ENCODE measurements at regions of chr19 and their contacts with region 1.

Region 1: GRCh38 chr19:3304871-3305423 is 61.4 kb upstream of the NFIC start:
- DNase-seq: peak; percentile 53 to 85 (median 79)
- ATAC-seq: peak; percentile 75
- H3K4me3 ChIP-seq: no peak overlapping the region
- H3K4me3 Mint-ChIP-seq: no peak overlapping the region
- H3K27ac ChIP-seq: no peak overlapping the region
- H3K27ac Mint-ChIP-seq: no peak overlapping the region
- H3K4me1 ChIP-seq: no peaks in the 10 kb centered on the region
- H3K4me1 Mint-ChIP-seq: no peaks in the 10 kb centered on the region
- H3K27me3 ChIP-seq: peaks cover 0 to 2% of the 10 kb centered on the region in 2 experiments
- H3K27me3 Mint-ChIP-seq: peaks cover 32% of the 10 kb centered on the region
- CTCF ChIP-seq: peak; percentile 82

Region 2: DNA sequence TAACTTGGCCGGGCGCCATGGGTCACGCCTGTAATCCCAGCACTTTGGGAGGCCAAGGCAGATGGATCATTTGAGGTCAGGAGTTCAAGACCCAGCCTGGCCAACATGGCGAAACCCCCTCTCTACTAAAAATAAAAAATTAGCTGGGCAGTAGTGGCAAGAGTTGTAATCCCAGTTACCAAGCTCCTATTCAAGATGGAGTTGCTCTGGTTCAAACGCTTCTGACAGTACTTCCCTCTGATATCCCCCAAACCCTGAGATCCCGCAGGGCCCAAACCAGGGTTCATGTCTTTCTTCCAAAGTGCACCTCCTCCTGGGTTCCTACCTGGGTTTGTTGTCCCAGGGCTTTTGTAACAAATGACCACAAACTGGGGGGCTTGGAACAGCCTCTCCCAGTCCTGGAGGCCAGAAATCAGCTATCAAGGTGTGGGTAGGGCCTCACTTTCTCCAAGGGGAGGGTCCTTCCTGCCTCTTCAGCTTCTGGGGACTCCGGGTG is 66.8 kb before region 1 on chr19:
- CTCF ChIA-PET with region 1: no interaction called
- POLR2A ChIA-PET with region 1: no interaction called
- intact Hi-C with region 1: no loop called
- DNase-seq: no peak
- ATAC-seq: no peak
- H3K4me3 ChIP-seq: no peak overlapping the region
- H3K4me3 Mint-ChIP-seq: no peak overlapping the region
- H3K27ac ChIP-seq: no peak overlapping the region
- H3K27ac Mint-ChIP-seq: no peak overlapping the region
- H3K4me1 ChIP-seq: no peaks in the 10 kb centered on the region
- H3K4me1 Mint-ChIP-seq: no peaks in the 10 kb centered on the region
- H3K27me3 ChIP-seq: no peaks in the 10 kb centered on the region
- H3K27me3 Mint-ChIP-seq: peaks cover 10% of the 10 kb centered on the region
- CTCF ChIP-seq: no peak

Region 3: GRCh38 chr19:3316132-3316648 is 11.2 kb after region 1 on chr19:
- CTCF ChIA-PET with region 1: interaction called, 11 read pairs
- POLR2A ChIA-PET with region 1: no interaction called
- intact Hi-C with region 1: no loop called
- DNase-seq: no peak
- ATAC-seq: no peak
- H3K4me3 ChIP-seq: no peak overlapping the region
- H3K4me3 Mint-ChIP-seq: no peak overlapping the region
- H3K27ac ChIP-seq: no peak overlapping the region
- H3K27ac Mint-ChIP-seq: no peak overlapping the region
- H3K4me1 ChIP-seq: no peaks in the 10 kb centered on the region
- H3K4me1 Mint-ChIP-seq: no peaks in the 10 kb centered on the region
- H3K27me3 ChIP-seq: peaks cover 10 to 22% of the 10 kb centered on the region in 2 experiments
- H3K27me3 Mint-ChIP-seq: peaks cover 24% of the 10 kb centered on the region
- CTCF ChIP-seq: no peak

Region 4: DNA sequence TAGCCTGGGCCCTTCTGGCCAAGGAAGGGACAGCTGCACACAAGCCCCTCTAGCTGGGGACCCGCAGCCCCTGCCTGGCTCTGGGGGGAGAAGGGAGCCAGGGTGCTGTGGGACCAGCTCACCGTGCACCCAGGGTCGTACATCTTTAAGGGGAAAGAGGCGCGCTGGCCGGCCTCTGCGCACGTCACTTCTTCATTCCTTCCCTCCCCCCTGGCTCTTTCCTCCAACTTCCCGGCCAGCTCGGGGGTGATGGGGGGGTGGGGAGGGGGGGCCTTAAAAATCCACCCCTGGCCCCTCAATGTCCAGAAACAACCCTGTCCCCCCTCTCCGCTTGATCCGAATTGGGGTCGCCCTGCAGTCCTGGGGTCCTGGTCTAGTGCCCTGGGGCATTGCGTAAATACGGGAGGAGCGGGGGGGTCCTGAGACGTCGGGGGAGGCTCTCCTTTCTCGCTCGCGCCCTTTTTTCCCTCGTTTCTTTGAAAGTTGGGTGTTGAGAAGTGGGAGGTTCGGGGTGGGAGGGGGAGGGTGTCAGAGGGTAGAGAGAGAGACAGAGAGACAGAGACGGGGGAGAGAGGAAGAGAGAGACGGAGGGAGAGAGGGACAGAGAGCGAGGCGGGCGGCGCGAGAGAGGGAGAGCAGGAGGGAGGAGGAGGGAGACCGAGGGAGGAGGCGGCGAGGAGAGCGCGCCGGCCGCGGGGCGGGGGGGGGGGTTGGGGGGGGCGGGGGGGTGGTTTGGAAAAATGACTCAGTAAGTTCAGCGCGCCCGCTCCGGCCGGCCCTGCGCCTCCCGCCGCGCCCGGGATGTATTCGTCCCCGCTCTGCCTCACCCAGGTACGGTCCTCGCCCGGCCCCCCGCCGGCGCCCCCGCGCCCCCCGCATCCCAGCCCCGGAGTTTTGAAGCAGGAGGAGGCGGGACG is 61.1 kb after region 1 on chr19 and contains the start of gene NFIC:
- CTCF ChIA-PET with region 1: no interaction called
- POLR2A ChIA-PET with region 1: no interaction called
- intact Hi-C with region 1: no loop called
- DNase-seq: peak in 4 of 9 experiments; percentile 40 to 65 (median 50)
- ATAC-seq: peak; percentile 21
- H3K4me3 ChIP-seq: peak within 1 kb of the TSS; percentile 46 to 50
- H3K4me3 Mint-ChIP-seq: peak within 1 kb of the TSS; percentile 72
- H3K27ac ChIP-seq: no peak within 1 kb of the TSS
- H3K27ac Mint-ChIP-seq: no peak within 1 kb of the TSS
- H3K4me1 ChIP-seq: peaks cover 38% of the 10 kb centered on the region
- H3K4me1 Mint-ChIP-seq: peaks cover 63% of the 10 kb centered on the region
- H3K27me3 ChIP-seq: no peaks in the 10 kb centered on the region
- H3K27me3 Mint-ChIP-seq: no peaks in the 10 kb centered on the region
- CTCF ChIP-seq: no peak
- total RNA-seq, gene NFIC: 16.5 to 17.5 TPM

Region 5: DNA sequence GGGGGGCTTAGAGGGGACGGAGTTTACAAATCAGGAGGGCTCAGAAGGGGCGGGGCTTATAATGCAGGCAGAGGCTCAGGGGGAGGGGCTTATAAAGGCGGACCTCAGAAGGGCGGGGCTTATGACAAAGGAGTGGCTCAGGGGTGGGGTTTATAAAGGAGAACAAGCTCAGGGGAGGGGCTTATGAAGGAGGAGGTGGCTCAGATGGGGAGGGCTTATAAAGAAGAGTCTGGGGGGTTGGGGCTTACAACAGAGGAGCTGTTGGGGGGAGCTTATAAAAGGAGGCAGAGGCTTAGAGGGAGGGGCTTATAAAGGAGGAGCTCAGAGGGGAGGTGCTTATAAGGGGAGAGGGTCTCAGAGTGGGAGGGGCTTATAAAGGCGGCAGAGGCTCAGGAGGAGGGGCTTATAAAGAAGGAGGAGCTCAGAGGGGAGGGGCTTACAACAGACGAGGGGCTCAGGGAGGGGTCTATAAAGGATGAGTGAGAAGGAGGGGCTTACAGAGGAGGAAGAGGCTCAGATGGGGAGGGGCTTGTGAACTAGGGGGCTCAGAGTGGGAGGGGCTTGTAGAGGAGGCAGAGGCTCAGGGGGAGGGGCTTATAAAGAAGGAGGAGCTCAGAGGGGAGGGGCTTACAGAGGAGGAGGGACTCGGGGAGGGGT is 174.4 kb after region 1 on chr19:
- CTCF ChIA-PET with region 1: interaction called, 12 read pairs
- POLR2A ChIA-PET with region 1: no interaction called
- intact Hi-C with region 1: no loop called
- DNase-seq: peak in 8 of 9 experiments; percentile 24 to 81 (median 54)
- ATAC-seq: peak; percentile 84
- H3K4me3 ChIP-seq: peak overlapping the region; percentile 33 to 43
- H3K4me3 Mint-ChIP-seq: no peak overlapping the region
- H3K27ac ChIP-seq: no peak overlapping the region
- H3K27ac Mint-ChIP-seq: no peak overlapping the region
- H3K4me1 ChIP-seq: peaks cover 18% of the 10 kb centered on the region
- H3K4me1 Mint-ChIP-seq: peaks cover 10% of the 10 kb centered on the region
- H3K27me3 ChIP-seq: no peaks in the 10 kb centered on the region
- H3K27me3 Mint-ChIP-seq: no peaks in the 10 kb centered on the region
- CTCF ChIP-seq: no peak

Measured in CD8-positive, alpha-beta T cell (primary cell).